Aorta (tissue), 5 donors: ENCODE measurements at regions of chr9 and their contacts with region 1.

Region 1: GRCh38 chr9:35829084-35829763 is at the start of gene TMEM8B:
- DNase-seq: peak; percentile 98
- ATAC-seq: peak; percentile 92
- H3K4me3 ChIP-seq: peak within 1 kb of the TSS; percentile 45 to 46
- H3K27ac ChIP-seq: peak within 1 kb of the TSS; percentile 66 to 87
- H3K4me1 ChIP-seq: peaks cover 0 to 5% of the 10 kb centered on the region in 2 donors
- H3K27me3 ChIP-seq: no peaks in the 10 kb centered on the region
- total RNA-seq, gene TMEM8B: 16.3 to 20.8 TPM

Region 2: GRCh38 chr9:35696525-35697215 is 132.6 kb before region 1 on chr9:
- intact Hi-C with region 1: no loop called
- DNase-seq: peak; percentile 63 to 83
- ATAC-seq: peak; percentile 66
- H3K4me3 ChIP-seq: no peak overlapping the region
- H3K27ac ChIP-seq: peak overlapping the region; percentile 97 to 99
- H3K4me1 ChIP-seq: no peaks in the 10 kb centered on the region
- H3K27me3 ChIP-seq: no peaks in the 10 kb centered on the region

Region 3: DNA sequence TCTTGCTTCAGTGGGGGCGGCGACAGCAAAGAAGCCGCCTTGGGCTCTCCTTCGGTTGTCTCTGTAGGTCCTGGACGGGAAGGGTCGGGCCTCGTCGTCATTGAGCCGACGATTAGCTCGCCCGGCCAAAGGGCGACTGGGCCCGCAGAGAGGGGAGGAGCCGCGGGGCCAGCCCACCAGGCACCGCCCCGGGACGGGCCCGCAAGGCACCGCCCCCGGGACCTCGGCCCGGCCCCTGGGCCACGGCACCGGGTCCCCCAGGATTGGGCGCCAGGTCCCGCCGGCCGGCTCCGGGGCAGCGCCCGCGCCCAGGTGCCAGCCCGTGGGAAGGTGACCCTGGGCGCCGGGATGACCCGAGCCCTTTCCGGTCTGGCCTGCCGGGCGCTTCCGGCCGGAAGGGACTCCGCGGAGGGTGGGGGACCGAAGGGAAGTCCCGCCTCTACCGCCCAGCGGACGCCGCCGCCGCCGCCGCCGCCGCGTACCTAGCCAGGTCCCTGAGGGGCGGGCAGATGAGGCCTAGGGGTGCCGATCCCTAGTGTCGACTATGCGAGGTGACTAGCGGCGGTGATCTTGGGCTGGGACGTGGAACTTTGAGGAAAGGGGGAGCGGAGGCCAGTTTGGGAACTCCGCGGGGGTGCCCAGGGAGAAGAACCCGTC is 80.2 kb before region 1 on chr9 and contains the starts of genes GBA2 and RGP1:
- intact Hi-C with region 1: loop called in 1 of 2 experiments (anchors 1 kb)
- DNase-seq: peak; percentile 87 to 94
- ATAC-seq: peak; percentile 91
- H3K4me3 ChIP-seq: peak within 1 kb of the TSS; percentile 92 to 96
- H3K27ac ChIP-seq: peak within 1 kb of the TSS; percentile 59 to 65
- H3K4me1 ChIP-seq: no peaks in the 10 kb centered on the region
- H3K27me3 ChIP-seq: no peaks in the 10 kb centered on the region
- total RNA-seq, gene GBA2: 83.8 to 83.9 TPM
- total RNA-seq, gene RGP1: 30.0 to 32.4 TPM

Region 4: DNA sequence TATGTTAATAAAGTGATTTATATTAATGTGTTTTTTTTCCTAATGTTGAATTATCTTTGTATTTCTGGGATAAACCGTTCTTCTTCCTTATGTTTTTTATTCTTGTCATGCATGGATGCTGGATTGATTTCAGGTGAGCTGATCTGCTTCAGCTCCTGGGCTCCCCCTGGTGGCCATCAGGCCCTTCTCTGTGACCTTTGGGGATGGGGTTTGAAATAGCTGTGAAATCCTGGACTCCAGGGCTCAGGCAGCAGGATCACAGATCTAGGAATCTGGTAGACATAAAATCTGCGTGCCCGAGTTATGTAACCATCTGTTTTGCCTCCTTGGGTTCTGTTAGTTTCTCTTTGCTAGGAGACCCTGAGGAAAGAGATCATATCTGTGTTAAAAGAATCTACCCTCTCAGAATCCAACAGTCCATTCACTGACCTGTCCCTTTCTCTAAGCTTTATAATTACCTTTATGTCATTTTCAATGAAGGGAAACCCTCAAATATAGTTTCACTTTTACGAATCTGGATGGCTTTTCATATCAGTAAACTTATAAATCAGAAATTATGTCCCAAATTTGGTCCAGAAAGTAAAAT is 53.1 kb after region 1 on chr9:
- intact Hi-C with region 1: loop called in 1 of 2 experiments (anchors 5 kb)
- DNase-seq: peak; percentile 87 to 95
- ATAC-seq: peak; percentile 88
- H3K4me3 ChIP-seq: no peak overlapping the region
- H3K27ac ChIP-seq: no peak overlapping the region
- H3K4me1 ChIP-seq: no peaks in the 10 kb centered on the region
- H3K27me3 ChIP-seq: no peaks in the 10 kb centered on the region